ENCODE measurements at regions of chr10 and their contacts with region 1.

Region 1: DNA sequence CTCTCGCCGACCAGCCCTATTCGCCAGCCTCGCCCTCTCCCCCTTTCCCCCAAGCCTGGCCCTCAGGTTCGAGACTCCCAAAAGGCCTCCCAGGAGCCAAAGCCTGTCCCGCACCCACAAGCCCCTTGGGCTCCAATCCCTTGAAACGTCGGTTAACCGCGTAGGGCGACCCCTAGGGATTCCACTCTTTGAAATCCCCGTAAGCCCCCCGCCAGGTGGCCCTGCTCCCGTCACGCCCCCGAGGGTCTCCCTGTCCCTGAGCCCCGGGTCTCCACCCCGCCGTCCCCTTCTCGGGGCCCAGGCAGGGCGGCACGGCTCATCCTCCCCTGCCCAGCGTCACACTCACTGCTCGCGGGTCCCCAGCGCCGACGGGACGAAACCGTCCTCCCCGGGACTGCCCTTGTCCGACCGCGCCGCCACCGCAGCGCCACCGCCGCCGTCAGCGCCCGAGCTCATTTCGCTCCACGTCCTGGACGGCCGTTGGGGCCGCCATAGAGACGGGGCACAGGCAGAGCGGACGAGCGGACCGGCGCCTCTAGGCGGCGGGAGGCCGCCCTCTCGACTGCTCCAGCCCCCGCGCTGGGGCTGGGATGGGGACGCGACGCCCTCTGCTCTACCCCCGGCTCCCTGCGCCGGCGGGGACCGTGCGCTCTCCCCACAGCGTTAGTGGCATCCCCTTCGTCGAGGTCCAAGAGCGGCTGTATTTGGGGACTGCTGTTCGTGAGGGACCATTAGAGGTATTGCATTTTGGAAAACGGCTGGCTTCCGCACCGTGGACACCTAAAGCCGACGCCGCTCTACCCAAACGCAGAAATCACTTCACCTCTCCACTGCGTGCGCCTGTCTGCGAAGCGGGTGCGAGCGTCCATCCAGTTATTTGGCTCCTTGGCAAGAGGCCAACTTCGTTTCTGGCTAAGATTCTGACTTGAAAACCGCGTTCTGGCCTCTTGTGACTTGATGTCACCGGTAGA is at the start of gene EEF1AKMT2:
- DNase-seq: peak; percentile 84 to 89
- ATAC-seq: peak; percentile 98 to 99
- H3K4me3 ChIP-seq: peak within 1 kb of the TSS; percentile 93
- H3K27ac ChIP-seq: peak within 1 kb of the TSS; percentile 94 to 98
- H3K4me1 ChIP-seq: peaks cover 5% of the 10 kb centered on the region; the same call in 2 of the 3 replicates
- CTCF ChIP-seq: 0 out of 3 replicates have a peak, but pooled peaks have one; percentile 11
- EP300 ChIP-seq: no peak
- POLR2A ChIP-seq: peak; percentile 92
- RAD21 ChIP-seq: no peak; a peak in 1 of 5 replicates
- polyA plus RNA-seq, gene EEF1AKMT2: 21.5 and 28.1 TPM in 2 replicates

Region 2: DNA sequence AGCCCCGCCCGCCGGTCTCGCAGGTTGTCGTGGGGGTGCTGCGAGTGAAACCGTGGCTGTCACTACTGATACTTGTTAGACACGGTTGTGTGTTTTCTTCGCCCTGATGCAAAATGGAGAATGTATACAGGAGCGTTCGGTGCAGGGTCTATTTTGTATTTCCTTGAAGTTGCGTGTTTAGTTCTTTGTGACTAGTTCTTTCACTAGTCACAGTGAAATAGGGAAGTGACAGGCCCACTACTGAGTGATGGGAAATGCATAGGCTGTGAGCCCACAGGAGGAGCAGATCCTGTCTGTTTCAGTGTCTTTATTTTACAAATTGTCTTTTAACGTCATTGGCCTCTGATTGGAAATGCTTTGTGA is 10.6 kb after region 1 on chr10:
- CTCF ChIA-PET with region 1: interaction called, 4 read pairs
- POLR2A ChIA-PET with region 1: interaction called, 30 read pairs
- DNase-seq: peak in 1 of 2 experiments; percentile 6
- ATAC-seq: peak; percentile 15 to 21; a peak in 3 of 6 replicates
- H3K4me3 ChIP-seq: peak overlapping the region; percentile 96
- H3K27ac ChIP-seq: peak overlapping the region; percentile 90 to 98
- H3K4me1 ChIP-seq: peaks cover 11% of the 10 kb centered on the region; the same call in 2 of the 3 replicates
- CTCF ChIP-seq: no peak
- EP300 ChIP-seq: no peak
- POLR2A ChIP-seq: no peak
- RAD21 ChIP-seq: no peak

Region 3: DNA sequence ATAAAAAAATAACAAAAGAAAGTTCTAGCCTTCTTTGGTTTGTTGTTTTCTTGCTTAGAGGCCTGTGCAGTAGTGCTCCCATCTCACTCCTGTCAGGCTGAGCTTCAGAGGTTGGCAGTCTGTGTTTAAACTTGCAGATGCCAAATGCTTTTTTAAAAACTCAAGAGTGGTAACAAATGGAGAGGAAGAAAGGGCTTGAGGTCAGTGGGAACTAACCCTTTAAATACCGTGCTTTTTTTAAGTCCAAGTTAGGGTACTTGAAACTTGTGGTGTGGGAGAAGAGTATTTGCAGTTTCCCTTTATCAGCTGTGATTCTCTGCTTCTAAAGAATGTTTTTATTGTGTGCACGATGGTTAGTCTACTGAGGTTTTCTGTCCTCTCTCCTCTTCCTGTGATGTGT is 179.6 kb after region 1 on chr10:
- CTCF ChIA-PET with region 1: no interaction called
- POLR2A ChIA-PET with region 1: interaction called, 14 read pairs
- DNase-seq: no peak
- ATAC-seq: no peak
- H3K4me3 ChIP-seq: no peak overlapping the region
- H3K27ac ChIP-seq: no peak overlapping the region
- H3K4me1 ChIP-seq: no peaks in the 10 kb centered on the region
- CTCF ChIP-seq: no peak
- EP300 ChIP-seq: no peak
- POLR2A ChIP-seq: no peak
- RAD21 ChIP-seq: no peak

Measured in A549 (cell line).